Calu3 (cell line): ENCODE measurements at regions of chr4 and their contacts with region 1.

Region 1: DNA sequence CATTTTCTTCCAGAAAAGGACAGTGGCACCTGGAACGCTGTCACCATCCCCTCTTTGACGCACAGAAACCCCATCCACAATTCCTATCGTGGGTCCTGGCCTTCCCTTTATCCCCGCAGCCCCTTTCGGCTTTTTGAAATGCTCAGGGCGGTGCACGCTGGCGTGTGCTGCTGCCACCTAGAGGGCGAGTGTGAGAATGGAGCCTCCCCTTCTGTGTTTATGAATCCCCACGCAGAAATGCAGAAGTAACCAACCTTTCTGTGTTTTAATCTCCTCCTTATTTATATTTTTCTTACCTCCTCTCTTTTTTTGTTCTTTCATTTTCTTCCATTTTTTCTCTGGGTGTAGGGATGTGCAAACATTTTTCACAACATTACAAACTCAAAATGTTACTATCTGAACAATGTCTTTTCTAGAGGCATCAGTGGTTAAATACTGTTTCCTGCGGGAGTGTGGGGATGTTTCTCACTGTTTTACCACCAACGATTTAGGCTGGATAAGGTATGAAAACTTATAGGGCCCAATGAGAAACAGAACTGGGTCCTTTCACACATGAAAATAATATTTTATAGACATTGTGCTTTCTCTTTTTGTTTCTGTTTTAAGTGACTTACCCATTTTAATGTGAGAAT is 50.0 kb downstream of the TMA16 start:
- DNase-seq: peak; percentile 56
- H3K4me3 Mint-ChIP-seq: no peak overlapping the region
- H3K27ac Mint-ChIP-seq: no peak overlapping the region
- H3K4me1 Mint-ChIP-seq: no peaks in the 10 kb centered on the region
- H3K27me3 Mint-ChIP-seq: no peaks in the 10 kb centered on the region
- CTCF ChIP-seq: peak; percentile 74

Region 2: DNA sequence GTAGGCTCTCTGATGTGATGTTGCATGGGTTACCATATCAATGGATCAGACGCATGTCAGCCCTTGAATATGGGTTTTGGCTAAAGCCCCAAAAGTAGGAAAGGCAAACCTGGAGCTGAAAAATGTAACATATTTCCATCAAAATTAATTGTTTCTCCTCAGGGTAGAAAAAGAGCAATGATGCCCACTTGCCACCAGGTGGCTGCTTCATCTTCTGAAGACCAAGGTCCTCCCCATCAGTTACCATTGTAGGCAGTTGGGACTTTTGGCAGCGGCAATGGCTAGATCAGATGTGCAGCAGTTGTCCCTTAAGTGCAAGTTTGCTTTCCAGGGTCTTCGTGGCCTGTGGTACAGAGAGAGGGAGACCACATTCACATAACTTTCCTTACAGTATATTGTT is 496.1 kb before region 1 on chr4:
- CTCF ChIA-PET with region 1: no interaction called
- intact Hi-C with region 1: loop called (anchors 1 kb)
- DNase-seq: peak; percentile 2
- H3K4me3 Mint-ChIP-seq: no peak overlapping the region
- H3K27ac Mint-ChIP-seq: no peak overlapping the region
- H3K4me1 Mint-ChIP-seq: no peaks in the 10 kb centered on the region
- H3K27me3 Mint-ChIP-seq: no peaks in the 10 kb centered on the region
- CTCF ChIP-seq: no peak

Region 3: DNA sequence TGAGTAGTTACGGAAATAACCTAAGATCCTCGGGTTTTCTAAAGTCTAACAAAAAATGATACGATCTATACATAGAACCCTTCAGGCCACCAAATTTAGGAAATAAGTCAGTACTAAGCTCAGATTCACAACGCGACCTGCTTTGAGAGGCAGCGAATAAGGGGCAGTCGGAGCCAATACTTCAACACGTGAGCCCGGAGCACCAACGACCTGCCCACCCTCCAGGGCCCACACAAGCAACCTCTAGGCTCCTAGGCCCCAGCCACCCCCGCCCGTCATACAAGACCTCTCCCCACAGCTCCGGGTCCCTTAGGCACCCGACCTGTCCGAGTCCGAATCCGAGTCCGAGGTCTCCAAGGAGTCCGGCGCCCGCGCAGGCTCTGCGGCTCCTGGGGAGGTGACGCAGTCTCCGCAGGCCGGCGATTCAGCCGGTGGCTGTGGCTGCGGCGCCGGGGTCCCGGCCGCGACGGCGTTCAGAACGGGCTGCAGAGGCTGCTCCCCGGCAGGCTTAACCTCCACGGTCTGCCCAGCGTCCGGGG is 378.4 kb before region 1 on chr4:
- CTCF ChIA-PET with region 1: no interaction called
- intact Hi-C with region 1: loop called (anchors 10 kb)
- DNase-seq: peak; percentile 51
- H3K4me3 Mint-ChIP-seq: peak overlapping the region; percentile 85
- H3K27ac Mint-ChIP-seq: peak overlapping the region; percentile 82
- H3K4me1 Mint-ChIP-seq: peaks cover 24% of the 10 kb centered on the region
- H3K27me3 Mint-ChIP-seq: no peaks in the 10 kb centered on the region
- CTCF ChIP-seq: no peak

Region 4: GRCh38 chr4:163484906-163485305 is 59.6 kb before region 1 on chr4:
- CTCF ChIA-PET with region 1: no interaction called
- intact Hi-C with region 1: loop called (anchors 1 kb)
- DNase-seq: peak; percentile 40
- H3K4me3 Mint-ChIP-seq: no peak overlapping the region
- H3K27ac Mint-ChIP-seq: no peak overlapping the region
- H3K4me1 Mint-ChIP-seq: no peaks in the 10 kb centered on the region
- H3K27me3 Mint-ChIP-seq: no peaks in the 10 kb centered on the region
- CTCF ChIP-seq: no peak